ENCODE measurements at regions of chr11 and their contacts with region 1.

Region 1: DNA sequence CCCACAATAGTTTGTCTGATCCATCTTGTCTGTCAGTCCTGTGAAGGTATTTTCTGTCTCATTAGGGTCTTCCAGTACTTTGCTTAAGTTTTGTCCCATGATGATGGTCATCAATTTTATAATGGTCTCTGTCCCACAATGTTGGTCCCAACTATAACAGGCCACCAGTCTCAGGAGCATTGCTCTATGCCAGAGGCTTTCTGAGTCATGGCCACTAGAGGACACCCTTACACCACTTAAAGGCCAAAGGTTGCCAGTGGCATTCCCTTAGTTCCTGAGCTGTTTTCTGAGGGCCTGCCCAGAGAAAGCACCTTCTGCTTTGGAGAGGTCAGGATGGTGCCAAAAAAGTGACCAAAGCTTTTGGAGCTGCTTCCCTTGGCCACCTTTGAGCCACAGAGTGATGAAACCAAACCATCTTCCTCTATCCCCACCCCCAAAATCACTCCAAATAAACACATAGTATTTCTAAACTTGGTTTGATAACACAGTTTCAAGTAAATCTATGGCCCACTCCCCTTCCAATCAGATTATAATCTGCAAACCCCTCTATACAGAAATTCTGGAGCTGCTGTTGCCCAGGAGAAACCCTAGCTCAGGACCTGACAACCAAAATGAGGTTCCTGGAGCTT is 19.3 kb downstream of the EIF3F start:
- DNase-seq: peak; percentile 71
- ATAC-seq: peak; percentile 98
- H3K4me3 ChIP-seq: no peak overlapping the region
- H3K27ac ChIP-seq: no peak overlapping the region
- H3K4me1 ChIP-seq: peaks cover under 1% of the 10 kb centered on the region; the same call in 1 of the 2 replicates
- H3K27me3 ChIP-seq: no peaks in the 10 kb centered on the region
- CTCF ChIP-seq: peak; percentile 98
- POLR2A ChIP-seq: peak; percentile 61
- RAD21 ChIP-seq: peak; percentile 100

Region 2: DNA sequence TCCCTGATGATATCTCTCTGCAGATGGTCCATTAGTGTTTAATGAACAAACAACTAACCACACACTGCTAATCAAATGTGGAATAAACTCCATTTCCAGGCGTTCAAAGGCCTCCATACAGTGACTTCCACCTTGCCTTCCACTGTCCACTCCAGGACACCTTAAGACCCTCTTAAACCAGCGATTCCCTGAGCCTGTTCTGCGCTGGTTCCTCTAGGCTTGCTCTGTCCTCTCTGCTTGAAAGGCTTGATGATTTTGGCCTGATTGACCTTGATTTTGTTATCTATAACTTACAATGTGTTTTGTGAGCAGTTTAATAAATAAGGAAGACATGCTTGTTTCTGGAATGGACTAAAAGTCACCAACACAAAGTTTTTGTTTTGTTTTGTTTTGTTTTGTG is 312.2 kb before region 1 on chr11:
- CTCF ChIA-PET with region 1: interaction called, 11 read pairs
- POLR2A ChIA-PET with region 1: no interaction called
- dilution Hi-C with region 1: no loop called
- in situ Hi-C with region 1: no loop called
- intact Hi-C with region 1: no loop called
- DNase-seq: no peak
- ATAC-seq: no peak
- H3K4me3 ChIP-seq: no peak overlapping the region
- H3K27ac ChIP-seq: no peak overlapping the region
- H3K4me1 ChIP-seq: 0 out of 2 replicates have a peak, but pooled peaks cover 2% of the 10 kb centered on the region
- H3K27me3 ChIP-seq: peaks cover 13% of the 10 kb centered on the region
- CTCF ChIP-seq: no peak
- POLR2A ChIP-seq: no peak
- RAD21 ChIP-seq: no peak

Region 3: GRCh38 chr11:7833527-7833926 is 172.9 kb before region 1 on chr11:
- CTCF ChIA-PET with region 1: no interaction called
- POLR2A ChIA-PET with region 1: no interaction called
- dilution Hi-C with region 1: no loop called
- in situ Hi-C with region 1: no loop called
- intact Hi-C with region 1: no loop called
- DNase-seq: no peak
- ATAC-seq: no peak
- H3K4me3 ChIP-seq: no peak overlapping the region
- H3K27ac ChIP-seq: no peak overlapping the region
- H3K4me1 ChIP-seq: no peaks in the 10 kb centered on the region
- H3K27me3 ChIP-seq: no peaks in the 10 kb centered on the region
- CTCF ChIP-seq: no peak
- POLR2A ChIP-seq: no peak
- RAD21 ChIP-seq: no peak

Region 4: DNA sequence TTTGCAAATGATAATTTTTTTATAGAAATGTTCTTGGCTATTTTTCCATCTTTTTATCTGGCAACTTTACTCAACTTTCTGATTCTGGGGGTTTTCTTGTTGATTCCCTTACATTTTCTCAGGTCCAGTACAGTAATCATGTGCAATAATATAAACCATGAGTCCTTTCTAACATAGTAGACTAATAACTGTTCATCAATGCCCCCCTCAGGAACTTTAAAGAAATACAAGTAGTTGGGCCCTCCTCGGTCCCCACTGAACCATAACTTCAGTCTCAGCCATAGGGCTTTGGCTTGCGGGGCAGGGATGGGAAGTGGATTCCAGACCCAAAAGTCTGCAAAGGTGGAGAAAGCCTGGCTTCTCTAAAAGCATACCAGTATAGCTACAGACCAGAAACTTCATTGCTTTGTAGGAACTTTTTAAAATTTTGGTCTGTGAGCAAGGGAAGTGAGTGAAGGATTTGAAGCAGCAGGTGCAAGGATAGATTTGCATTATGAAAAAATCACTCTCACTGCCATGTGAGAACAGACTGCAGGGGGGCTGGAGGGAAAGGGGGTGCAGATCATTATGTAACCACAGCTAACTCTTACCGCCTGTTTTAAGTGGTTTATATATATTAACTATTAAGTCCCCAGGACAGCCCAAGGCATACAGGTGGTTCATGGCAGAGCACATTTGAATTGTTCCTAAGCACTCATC is 64.1 kb after region 1 on chr11:
- CTCF ChIA-PET with region 1: interaction called, 6 read pairs
- POLR2A ChIA-PET with region 1: no interaction called
- dilution Hi-C with region 1: no loop called
- in situ Hi-C with region 1: no loop called
- intact Hi-C with region 1: loop called (anchors 1 kb)
- DNase-seq: peak; percentile 61
- ATAC-seq: peak; percentile 57
- H3K4me3 ChIP-seq: no peak overlapping the region
- H3K27ac ChIP-seq: no peak overlapping the region
- H3K4me1 ChIP-seq: peaks cover 12% of the 10 kb centered on the region
- H3K27me3 ChIP-seq: peaks cover 12% of the 10 kb centered on the region; the same call in 1 of the 2 replicates
- CTCF ChIP-seq: peak; percentile 62
- POLR2A ChIP-seq: no peak
- RAD21 ChIP-seq: peak; percentile 58

Region 5: DNA sequence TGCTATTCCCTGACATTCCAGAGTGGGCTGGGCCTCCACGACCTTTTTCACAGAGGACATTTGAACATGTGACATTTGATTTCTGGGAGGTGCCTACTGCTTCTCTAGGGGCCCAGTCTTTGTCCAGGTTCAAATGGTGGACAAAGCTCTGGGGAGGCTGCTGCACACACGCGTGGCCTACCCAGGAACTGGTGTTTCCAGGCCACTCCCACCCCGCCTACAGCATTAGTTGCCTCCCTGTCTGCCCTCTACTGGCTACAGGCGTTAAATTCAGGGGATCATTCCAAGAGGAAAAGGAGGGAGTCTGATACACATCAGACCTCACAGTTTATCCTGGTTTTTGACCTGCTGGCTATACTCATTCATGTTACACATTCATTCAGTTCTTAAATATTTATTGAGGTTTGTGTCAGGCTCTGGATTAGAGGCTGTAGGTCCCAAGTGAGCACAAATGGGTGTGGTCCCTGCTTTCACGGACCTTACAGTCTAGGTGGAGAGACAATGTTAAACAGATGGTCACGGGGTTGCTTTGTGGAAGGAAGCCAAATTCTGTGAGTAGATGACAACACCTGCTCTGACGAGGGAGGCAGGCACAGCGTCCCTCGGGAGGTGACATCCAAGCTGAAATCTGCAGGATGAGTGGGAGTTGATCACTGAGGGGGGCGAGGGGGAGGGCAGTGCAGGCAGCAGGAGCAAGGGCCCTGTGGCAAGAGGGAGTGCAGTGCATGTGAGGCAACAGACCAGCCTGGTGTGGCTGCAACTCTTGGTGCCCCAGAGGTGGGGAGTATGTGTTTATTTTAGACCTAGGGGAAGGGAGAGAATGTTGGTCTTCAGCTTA is 86.3 kb after region 1 on chr11:
- CTCF ChIA-PET with region 1: interaction called, 55 read pairs
- POLR2A ChIA-PET with region 1: no interaction called
- dilution Hi-C with region 1: no loop called
- in situ Hi-C with region 1: loop called (anchors 5 kb)
- intact Hi-C with region 1: loop called (anchors 1 kb)
- DNase-seq: peak; percentile 66
- ATAC-seq: peak; percentile 97
- H3K4me3 ChIP-seq: no peak overlapping the region
- H3K27ac ChIP-seq: no peak overlapping the region
- H3K4me1 ChIP-seq: peaks cover under 1% of the 10 kb centered on the region; the same call in 1 of the 2 replicates
- H3K27me3 ChIP-seq: no peaks in the 10 kb centered on the region
- CTCF ChIP-seq: peak; percentile 73
- POLR2A ChIP-seq: no peak
- RAD21 ChIP-seq: peak; percentile 59

Region 6: GRCh38 chr11:8263769-8264410 is 257.4 kb after region 1 on chr11 and contains the start of gene LMO1:
- CTCF ChIA-PET with region 1: no interaction called
- POLR2A ChIA-PET with region 1: no interaction called
- dilution Hi-C with region 1: no loop called
- in situ Hi-C with region 1: no loop called
- intact Hi-C with region 1: loop called (anchors 1 kb)
- DNase-seq: peak; percentile 62
- ATAC-seq: peak; percentile 81
- H3K4me3 ChIP-seq: peak within 1 kb of the TSS; percentile 27
- H3K27ac ChIP-seq: no peak within 1 kb of the TSS
- H3K4me1 ChIP-seq: no peaks in the 10 kb centered on the region; the same call in 1 of the 2 replicates
- H3K27me3 ChIP-seq: peaks cover 84% of the 10 kb centered on the region
- CTCF ChIP-seq: peak; percentile 77
- POLR2A ChIP-seq: no peak
- RAD21 ChIP-seq: peak; percentile 58
- total RNA-seq, gene LMO1: not detected in 2 replicates

Region 7: GRCh38 chr11:9003573-9004309 is 997.3 kb after region 1 on chr11 and contains the start of gene NRIP3:
- CTCF ChIA-PET with region 1: no interaction called
- POLR2A ChIA-PET with region 1: no interaction called
- dilution Hi-C with region 1: no loop called
- in situ Hi-C with region 1: no loop called
- intact Hi-C with region 1: no loop called
- DNase-seq: peak; percentile 52
- ATAC-seq: peak; percentile 87
- H3K4me3 ChIP-seq: peak within 1 kb of the TSS; percentile 65
- H3K27ac ChIP-seq: peak within 1 kb of the TSS; percentile 1; the same call in 1 of the 2 replicates
- H3K4me1 ChIP-seq: peaks cover 7% of the 10 kb centered on the region; the same call in 1 of the 2 replicates
- H3K27me3 ChIP-seq: peaks cover 39% of the 10 kb centered on the region
- CTCF ChIP-seq: no peak
- POLR2A ChIP-seq: peak; percentile 95
- RAD21 ChIP-seq: no peak
- total RNA-seq, gene NRIP3: 43.6 and 46.4 TPM in 2 replicates